Aorta (tissue), 5 donors: ENCODE measurements at regions of chr3 and their contacts with region 1.

Region 1: DNA sequence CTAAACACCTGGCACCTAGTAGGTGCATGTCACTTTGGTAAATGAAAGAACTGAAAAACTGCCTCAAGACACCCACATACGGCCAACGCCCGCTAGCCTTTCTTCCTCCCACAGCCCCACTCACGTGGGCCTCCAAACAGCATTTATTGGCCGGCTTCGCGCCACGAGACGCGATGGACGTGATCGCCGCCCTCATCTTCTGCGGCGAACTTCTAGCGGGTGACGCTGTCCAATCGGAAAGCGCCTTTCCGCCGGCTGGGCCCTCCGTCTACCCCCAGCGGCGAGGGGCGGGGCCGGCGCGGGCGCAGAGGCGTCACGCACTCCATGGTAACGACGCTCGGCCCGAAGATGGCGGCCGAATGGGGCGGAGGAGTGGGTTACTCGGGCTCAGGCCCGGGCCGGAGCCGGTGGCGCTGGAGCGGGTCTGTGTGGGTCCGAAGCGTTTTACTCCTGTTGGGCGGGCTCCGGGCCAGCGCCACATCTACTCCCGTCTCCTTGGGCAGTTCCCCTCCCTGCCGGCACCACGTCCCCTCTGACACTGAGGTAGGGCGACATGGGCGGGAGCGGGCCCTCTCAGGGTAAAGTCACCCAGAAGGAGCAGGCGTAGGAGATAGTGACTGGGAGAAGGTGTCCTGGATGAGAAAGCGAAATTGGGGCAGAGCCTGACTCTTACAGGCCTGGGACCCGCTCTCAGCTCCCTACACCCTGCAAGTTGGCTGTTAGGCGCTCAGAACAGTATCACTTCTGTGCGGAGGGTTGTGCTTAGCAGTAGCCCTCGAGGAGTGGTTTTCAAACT is at the start of gene LMLN:
- DNase-seq: peak; percentile 98
- ATAC-seq: peak; percentile 99
- H3K4me3 ChIP-seq: peak within 1 kb of the TSS; percentile 27 to 60
- H3K27ac ChIP-seq: peak within 1 kb of the TSS; percentile 38 to 79
- H3K4me1 ChIP-seq: no peaks in the 10 kb centered on the region
- H3K27me3 ChIP-seq: no peaks in the 10 kb centered on the region
- total RNA-seq, gene LMLN: 5.1 to 6.4 TPM

Region 2: DNA sequence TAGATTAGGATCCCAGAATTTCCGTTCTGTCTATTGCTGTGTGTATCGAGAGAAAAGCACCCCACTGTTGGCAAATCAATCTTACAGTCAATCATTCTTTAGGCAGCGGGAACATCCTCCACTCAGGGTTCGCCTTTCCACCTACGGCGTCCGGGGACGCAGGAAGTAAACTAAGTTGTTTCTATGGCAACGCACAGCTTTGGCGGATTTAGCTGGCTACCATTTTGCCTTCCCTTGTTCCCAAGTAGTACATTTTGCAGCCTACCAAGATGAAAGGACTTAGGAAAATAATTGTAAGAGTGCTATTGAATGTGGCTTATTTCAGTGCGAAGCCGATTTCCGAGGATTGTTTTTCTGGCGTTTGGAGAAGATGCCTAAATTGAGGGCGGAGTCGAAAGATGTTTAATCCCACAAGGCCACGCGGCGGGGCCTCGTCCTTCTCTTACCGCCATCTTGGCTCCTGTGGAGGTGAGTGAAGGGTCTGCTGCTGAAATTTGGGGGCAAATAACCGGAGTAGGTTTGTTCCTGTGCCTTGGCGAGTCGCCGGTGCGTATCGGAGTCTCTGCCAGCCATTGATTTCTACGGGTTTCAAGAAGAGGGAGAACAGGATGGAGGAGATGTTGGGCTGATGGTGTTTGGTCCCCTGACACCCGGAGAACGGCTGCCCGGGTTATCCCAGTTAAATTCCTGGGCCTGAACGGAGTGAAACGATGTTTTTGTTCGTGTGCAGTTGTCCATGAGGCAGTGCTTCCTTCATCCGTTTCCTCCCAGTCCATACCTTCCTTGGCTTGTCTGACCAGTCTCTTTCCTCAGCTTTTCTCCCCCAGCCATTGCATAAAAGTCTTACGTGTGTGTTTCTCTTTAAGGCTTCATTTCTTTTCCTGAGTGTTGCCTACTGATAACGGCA is 10.1 kb before region 1 on chr3 and contains the start of gene RPL35A:
- intact Hi-C with region 1: loop called in 1 of 2 experiments (anchors 1 kb)
- DNase-seq: peak; percentile 91 to 94
- ATAC-seq: peak; percentile 96
- H3K4me3 ChIP-seq: peak within 1 kb of the TSS; percentile 82 to 98
- H3K27ac ChIP-seq: peak within 1 kb of the TSS; percentile 74 to 91
- H3K4me1 ChIP-seq: peaks cover 0 to 4% of the 10 kb centered on the region in 2 donors
- H3K27me3 ChIP-seq: no peaks in the 10 kb centered on the region
- total RNA-seq, gene RPL35A: 637 to 745 TPM

Region 3: GRCh38 chr3:198043119-198043518 is 83.0 kb after region 1 on chr3:
- intact Hi-C with region 1: no loop called
- DNase-seq: no peak
- ATAC-seq: no peak
- H3K4me3 ChIP-seq: no peak overlapping the region
- H3K27ac ChIP-seq: no peak overlapping the region
- H3K4me1 ChIP-seq: no peaks in the 10 kb centered on the region
- H3K27me3 ChIP-seq: no peaks in the 10 kb centered on the region